GM10248 (cell line): ENCODE measurements at regions of chr1 and their contacts with region 1.

Region 1: GRCh38 chr1:40531381-40532061 is at the start of gene ZNF684:
- DNase-seq: peak; percentile 92
- CTCF ChIP-seq: no peak

Region 2: DNA sequence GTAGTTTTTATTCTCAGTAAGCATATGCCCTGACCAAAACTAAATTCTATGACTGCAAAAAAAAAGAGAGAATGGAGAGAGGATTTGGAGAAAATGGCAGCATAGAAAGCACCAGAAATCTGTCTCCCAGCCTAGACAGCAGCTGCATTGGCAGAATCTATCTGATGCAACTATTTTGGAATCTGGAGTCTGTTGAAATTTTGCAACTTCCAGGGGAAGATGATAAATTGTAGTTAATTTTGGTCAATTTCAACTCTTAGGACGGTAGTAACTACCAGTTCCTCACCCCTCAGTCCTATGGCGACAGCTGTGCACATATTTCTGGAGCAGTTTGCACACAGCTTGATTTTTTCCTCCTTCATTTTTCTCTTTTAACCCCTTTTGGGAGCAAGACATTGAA is 12.0 kb before region 1 on chr1:
- CTCF ChIA-PET with region 1: interaction called, 24 read pairs
- POLR2A ChIA-PET with region 1: no interaction called
- DNase-seq: no peak
- CTCF ChIP-seq: no peak

Region 3: DNA sequence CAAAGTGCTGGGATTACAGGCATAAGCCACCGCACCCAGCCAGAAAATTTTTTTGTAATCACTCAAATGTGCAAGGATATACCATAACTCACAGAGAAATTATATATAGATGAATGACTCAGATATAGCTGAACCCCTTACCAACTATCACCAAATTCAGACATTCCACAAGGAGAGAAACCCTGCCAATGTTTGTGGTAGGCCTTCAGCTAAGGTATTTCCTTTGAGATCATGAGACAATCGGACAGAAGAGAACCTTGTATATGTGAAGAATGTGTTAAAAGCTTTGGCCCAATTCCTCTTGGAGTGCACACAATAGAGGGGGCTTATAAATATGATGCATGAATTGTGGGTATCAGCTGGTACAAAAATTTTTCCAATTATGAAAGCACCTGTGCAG is 50.6 kb after region 1 on chr1:
- CTCF ChIA-PET with region 1: no interaction called
- POLR2A ChIA-PET with region 1: no interaction called
- DNase-seq: no peak
- CTCF ChIP-seq: no peak